Left cardiac atrium (tissue), 4 donors: ENCODE measurements at regions of chr10 and their contacts with region 1.

Region 1: GRCh38 chr10:92562424-92562823 is 11.5 kb downstream of the IDE start:
- DNase-seq: no peak
- ATAC-seq: no peak

Region 2: DNA sequence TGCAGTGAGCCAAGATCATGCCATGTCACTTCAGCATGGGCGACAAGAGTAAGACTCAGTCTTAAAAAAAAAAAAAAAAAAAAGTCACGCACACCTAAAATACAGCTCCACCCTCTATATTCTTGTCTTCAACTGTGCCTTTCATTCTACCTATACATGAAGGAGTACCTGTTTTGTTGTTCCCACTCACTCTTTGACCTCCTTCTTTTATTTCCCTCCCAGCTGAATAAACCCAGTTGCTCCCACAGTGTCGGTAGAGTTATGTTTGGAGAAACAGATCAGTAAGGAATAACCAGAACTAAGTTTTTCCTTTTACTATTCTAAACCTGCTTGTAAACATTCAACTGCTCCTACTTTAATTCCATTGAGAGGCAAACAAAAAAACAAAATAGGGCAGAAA is 38.8 kb before region 1 on chr10:
- intact Hi-C with region 1: loop called in 1 of 2 experiments (anchors 5 kb)
- DNase-seq: no peak
- ATAC-seq: no peak

Region 3: GRCh38 chr10:92848441-92849233 is 286.2 kb after region 1 on chr10 and contains the start of gene EXOC6:
- intact Hi-C with region 1: no loop called
- DNase-seq: peak; percentile 88
- ATAC-seq: peak; percentile 93 to 95
- total RNA-seq, gene EXOC6: 9.7 to 13.4 TPM